Endothelial cell of umbilical vein (primary cell): ENCODE measurements at regions of chr6 and their contacts with region 1.

Region 1: GRCh38 chr6:133916650-133917151 is 27.8 kb downstream of the TCF21 start:
- DNase-seq: peak; percentile 83
- H3K4me3 ChIP-seq: no peak overlapping the region
- H3K27ac ChIP-seq: no peak overlapping the region
- H3K4me1 ChIP-seq: no peaks in the 10 kb centered on the region
- H3K27me3 ChIP-seq: peaks cover 9 to 37% of the 10 kb centered on the region in 2 experiments
- CTCF ChIP-seq: peak; percentile 89 to 90
- POLR2A ChIP-seq: no peak

Region 2: DNA sequence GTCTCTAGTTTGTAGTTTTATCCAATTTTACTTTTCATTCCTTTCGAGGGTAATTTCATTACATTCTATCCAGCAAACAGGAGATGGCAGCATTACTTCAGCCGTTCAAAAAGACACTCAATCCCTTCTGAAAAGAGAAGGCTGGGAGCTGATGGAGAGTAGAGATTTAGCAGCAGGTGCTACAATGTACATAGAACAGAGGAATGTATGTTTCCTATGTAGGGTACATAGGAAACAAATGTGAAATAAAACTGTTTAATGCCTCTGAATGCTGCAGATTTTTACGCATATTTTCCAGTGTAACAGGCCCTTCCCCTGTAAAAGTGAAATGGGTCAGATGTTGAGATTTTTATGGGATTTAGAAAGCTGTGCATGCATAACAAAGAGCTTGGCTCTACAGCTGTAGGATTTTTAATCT is 1086.4 kb before region 1 on chr6:
- CTCF ChIA-PET with region 1: interaction called, 17 read pairs
- POLR2A ChIA-PET with region 1: no interaction called
- dilution Hi-C with region 1: no loop called
- intact Hi-C with region 1: loop called (anchors 10 kb)
- DNase-seq: peak; percentile 34
- H3K4me3 ChIP-seq: no peak overlapping the region
- H3K27ac ChIP-seq: no peak overlapping the region
- H3K4me1 ChIP-seq: no peaks in the 10 kb centered on the region
- H3K27me3 ChIP-seq: no peaks in the 10 kb centered on the region
- CTCF ChIP-seq: peak in 1 of 2 donors; percentile 18
- POLR2A ChIP-seq: no peak

Region 3: DNA sequence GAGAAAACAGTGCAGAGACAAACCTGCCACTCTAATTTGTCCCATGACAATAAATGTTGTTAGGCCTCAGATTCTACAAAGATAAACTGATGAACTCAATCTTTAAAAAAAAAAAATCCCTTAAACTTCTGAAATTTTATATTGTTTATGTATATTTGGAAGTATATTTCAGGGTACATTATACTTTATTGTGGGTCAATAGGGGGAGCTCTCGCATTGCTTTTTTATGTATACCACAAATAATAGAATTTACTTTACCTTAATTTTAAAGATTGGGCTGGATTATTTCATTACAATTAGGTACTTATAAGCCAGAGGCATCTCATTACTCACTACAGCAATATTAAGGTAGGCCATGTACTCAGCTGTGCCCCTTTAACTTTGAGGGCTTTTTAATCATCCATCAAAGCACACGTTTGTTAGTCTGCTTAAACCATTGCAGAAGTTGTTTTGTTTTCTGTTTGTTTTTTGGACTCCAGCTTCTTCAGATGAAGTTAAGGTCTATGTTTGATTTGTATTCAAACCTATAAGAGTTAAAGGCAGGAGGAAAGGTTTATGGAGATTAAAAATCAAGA is 731.8 kb before region 1 on chr6:
- CTCF ChIA-PET with region 1: interaction called, 15 read pairs
- POLR2A ChIA-PET with region 1: no interaction called
- dilution Hi-C with region 1: no loop called
- intact Hi-C with region 1: loop called (anchors 2 kb)
- DNase-seq: peak; percentile 32
- H3K4me3 ChIP-seq: no peak overlapping the region
- H3K27ac ChIP-seq: no peak overlapping the region
- H3K4me1 ChIP-seq: no peaks in the 10 kb centered on the region
- H3K27me3 ChIP-seq: no peaks in the 10 kb centered on the region
- CTCF ChIP-seq: peak; percentile 18 to 35
- POLR2A ChIP-seq: no peak

Region 4: GRCh38 chr6:133804263-133804662 is 112.4 kb before region 1 on chr6:
- CTCF ChIA-PET with region 1: no interaction called
- POLR2A ChIA-PET with region 1: no interaction called
- dilution Hi-C with region 1: no loop called
- intact Hi-C with region 1: no loop called
- DNase-seq: peak; percentile 8
- H3K4me3 ChIP-seq: no peak overlapping the region
- H3K27ac ChIP-seq: no peak overlapping the region
- H3K4me1 ChIP-seq: no peaks in the 10 kb centered on the region
- H3K27me3 ChIP-seq: no peaks in the 10 kb centered on the region
- CTCF ChIP-seq: no peak
- POLR2A ChIP-seq: no peak

Region 5: GRCh38 chr6:133837801-133838349 is 78.8 kb before region 1 on chr6:
- CTCF ChIA-PET with region 1: interaction called, 145 read pairs
- POLR2A ChIA-PET with region 1: no interaction called
- dilution Hi-C with region 1: no loop called
- intact Hi-C with region 1: loop called (anchors 1 kb)
- DNase-seq: peak; percentile 34
- H3K4me3 ChIP-seq: peak overlapping the region; percentile 7 to 24 (median 19)
- H3K27ac ChIP-seq: no peak overlapping the region
- H3K4me1 ChIP-seq: peaks cover 2% of the 10 kb centered on the region
- H3K27me3 ChIP-seq: peaks cover 2 to 5% of the 10 kb centered on the region in 2 experiments
- CTCF ChIP-seq: peak; percentile 78 to 87
- POLR2A ChIP-seq: no peak

Region 6: GRCh38 chr6:133896344-133896721 is 20.4 kb before region 1 on chr6:
- CTCF ChIA-PET with region 1: interaction called, 28 read pairs
- POLR2A ChIA-PET with region 1: no interaction called
- dilution Hi-C with region 1: no loop called
- intact Hi-C with region 1: no loop called
- DNase-seq: no peak
- H3K4me3 ChIP-seq: no peak overlapping the region
- H3K27ac ChIP-seq: no peak overlapping the region
- H3K4me1 ChIP-seq: no peaks in the 10 kb centered on the region
- H3K27me3 ChIP-seq: peaks cover 62 to 78% of the 10 kb centered on the region in 2 experiments
- CTCF ChIP-seq: no peak
- POLR2A ChIP-seq: no peak

Region 7: DNA sequence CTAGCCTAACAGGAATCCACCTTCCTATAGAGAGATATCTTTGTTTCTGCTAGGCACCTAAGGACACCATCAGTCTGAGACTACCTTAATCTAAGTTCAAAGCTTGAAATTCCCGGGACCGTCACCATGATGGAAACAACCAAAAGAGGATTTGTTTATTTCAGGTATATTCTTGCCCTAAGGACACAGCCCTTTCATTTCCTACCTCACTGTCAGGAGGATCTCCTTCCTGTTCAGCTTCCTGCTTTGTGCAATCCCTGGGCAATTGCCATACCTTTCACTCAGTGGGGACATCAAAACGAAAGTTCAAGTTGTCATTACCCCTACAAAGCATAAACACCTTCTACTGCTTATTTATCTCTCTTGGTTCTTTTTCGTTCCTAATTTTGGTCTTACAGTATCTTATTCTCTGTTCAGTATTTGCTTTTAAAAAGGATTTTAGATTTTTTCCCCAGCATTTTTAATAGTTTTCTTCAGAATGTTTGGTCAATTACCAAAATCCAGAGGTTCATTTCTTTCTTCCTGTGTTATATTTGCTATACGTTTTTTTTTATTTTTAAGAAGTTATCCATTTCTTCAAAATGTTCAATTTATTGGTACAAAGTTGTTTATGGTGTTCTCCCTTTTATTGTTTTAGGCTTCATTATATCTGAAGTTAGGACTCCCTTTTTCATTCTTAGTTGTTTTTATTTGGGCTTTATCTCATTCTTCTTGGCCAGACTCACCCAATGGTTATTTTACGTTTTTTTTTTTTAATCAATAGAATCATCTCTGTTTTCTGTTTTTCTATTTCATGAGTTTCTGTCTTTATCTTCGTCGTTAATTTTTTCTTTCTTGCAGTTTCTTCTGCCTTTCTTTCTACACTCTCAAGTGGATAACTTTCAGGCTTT is 23.3 kb after region 1 on chr6:
- CTCF ChIA-PET with region 1: interaction called, 19 read pairs
- POLR2A ChIA-PET with region 1: no interaction called
- dilution Hi-C with region 1: no loop called
- intact Hi-C with region 1: no loop called
- DNase-seq: no peak
- H3K4me3 ChIP-seq: no peak overlapping the region
- H3K27ac ChIP-seq: no peak overlapping the region
- H3K4me1 ChIP-seq: no peaks in the 10 kb centered on the region
- H3K27me3 ChIP-seq: peaks cover 7 to 16% of the 10 kb centered on the region in 2 experiments
- CTCF ChIP-seq: no peak
- POLR2A ChIP-seq: no peak

Region 8: DNA sequence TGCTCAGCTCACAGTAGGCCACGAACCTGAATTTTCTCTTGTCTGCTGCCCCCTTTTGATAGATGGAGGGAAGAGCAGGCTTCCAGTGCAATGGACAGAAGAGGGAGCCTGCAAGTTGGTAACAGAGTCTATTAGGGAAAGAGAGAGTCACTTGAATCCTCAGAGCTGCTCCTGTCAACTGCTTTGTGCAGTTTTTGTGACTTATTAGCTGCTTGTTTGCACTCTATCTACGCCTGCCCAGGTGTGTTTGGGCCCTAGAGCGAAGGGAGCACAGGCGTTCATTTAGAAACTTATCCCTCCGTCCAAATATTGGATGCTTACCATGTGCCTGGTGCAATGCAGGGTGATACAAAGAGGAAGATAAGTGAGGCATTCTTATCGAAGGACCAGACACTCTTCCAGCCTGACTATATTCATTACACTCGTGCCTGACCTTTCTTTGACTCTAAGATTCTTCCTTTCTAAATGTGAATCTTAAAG is 147.3 kb after region 1 on chr6:
- CTCF ChIA-PET with region 1: interaction called, 25 read pairs
- POLR2A ChIA-PET with region 1: no interaction called
- dilution Hi-C with region 1: no loop called
- intact Hi-C with region 1: no loop called
- DNase-seq: peak; percentile 80
- H3K4me3 ChIP-seq: no peak overlapping the region
- H3K27ac ChIP-seq: no peak overlapping the region
- H3K4me1 ChIP-seq: peaks cover 10% of the 10 kb centered on the region
- H3K27me3 ChIP-seq: no peaks in the 10 kb centered on the region
- CTCF ChIP-seq: peak; percentile 85 to 89
- POLR2A ChIP-seq: no peak